Testis (tissue), 5 donors: ENCODE measurements at regions of chr9 and their contacts with region 1.

Region 1: GRCh38 chr9:129783516-129784361 is 19.2 kb upstream of the TOR1B start:
- DNase-seq: peak; percentile 83
- H3K4me3 ChIP-seq: no peak overlapping the region
- H3K27ac ChIP-seq: no peak overlapping the region
- H3K4me1 ChIP-seq: no peaks in the 10 kb centered on the region
- H3K27me3 ChIP-seq: no peaks in the 10 kb centered on the region
- CTCF ChIP-seq: peak; percentile 83 to 93 (median 92)
- POLR2A ChIP-seq: no peak

Region 2: DNA sequence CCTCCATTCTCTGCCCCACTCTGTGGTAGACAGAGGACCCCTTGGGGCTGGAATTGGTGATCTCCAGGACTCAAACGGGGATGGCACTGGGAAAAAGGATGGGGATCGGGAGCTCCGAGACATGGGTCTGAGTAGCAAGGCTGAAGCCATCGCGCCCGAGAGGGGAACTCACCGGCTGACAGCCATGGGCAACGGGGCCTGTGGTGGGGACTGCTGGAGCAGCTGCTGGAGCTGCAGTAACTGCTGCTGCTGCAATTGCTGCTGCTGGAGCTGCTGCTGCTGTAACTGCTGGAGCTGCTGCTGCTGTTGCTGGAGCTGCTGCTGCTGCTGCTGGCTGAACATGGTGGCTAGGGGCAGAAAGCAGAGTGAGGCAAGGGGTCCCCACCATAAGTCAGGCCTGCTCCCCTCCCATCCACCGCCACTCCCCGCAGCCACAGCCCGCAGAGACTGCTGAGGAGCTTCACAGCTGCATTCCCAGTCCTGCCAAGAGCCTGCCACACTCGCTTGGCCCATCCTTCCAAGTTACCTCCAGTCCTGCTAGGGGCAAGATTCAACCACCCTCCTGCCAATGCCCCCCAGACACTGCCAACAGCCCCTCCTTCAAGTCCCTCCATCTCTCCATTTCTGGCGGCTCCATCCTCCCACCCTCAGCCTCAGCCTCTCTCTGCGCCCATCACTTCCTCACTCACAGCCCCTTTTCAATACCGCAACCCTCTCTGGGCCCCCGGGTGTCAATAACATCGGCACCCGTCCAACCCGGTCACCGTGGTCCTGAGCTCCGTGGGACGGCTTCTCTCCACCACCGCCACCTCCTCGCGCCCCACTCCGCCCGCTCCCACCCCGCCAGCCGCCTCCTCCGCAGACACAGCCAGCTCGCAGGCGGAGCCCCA is 1593.0 kb before region 1 on chr9:
- intact Hi-C with region 1: no loop called
- DNase-seq: peak; percentile 32
- H3K4me3 ChIP-seq: peak overlapping the region; percentile 83 to 90
- H3K27ac ChIP-seq: peak overlapping the region; percentile 84 to 86
- H3K4me1 ChIP-seq: peaks cover 15% of the 10 kb centered on the region
- H3K27me3 ChIP-seq: no peaks in the 10 kb centered on the region
- CTCF ChIP-seq: no peak
- POLR2A ChIP-seq: no peak

Region 3: GRCh38 chr9:129139993-129140396 is 643.7 kb before region 1 on chr9:
- intact Hi-C with region 1: loop called (anchors 10 kb)
- DNase-seq: peak; percentile 94
- H3K4me3 ChIP-seq: peak overlapping the region in 1 of 2 donors; percentile 9
- H3K27ac ChIP-seq: peak overlapping the region; percentile 96 to 98
- H3K4me1 ChIP-seq: peaks cover 71% of the 10 kb centered on the region
- H3K27me3 ChIP-seq: no peaks in the 10 kb centered on the region
- CTCF ChIP-seq: no peak
- POLR2A ChIP-seq: no peak

Region 4: GRCh38 chr9:129648092-129648763 is 135.5 kb before region 1 on chr9:
- intact Hi-C with region 1: loop called (anchors 5 kb)
- DNase-seq: no peak
- H3K4me3 ChIP-seq: no peak overlapping the region
- H3K27ac ChIP-seq: no peak overlapping the region
- H3K4me1 ChIP-seq: no peaks in the 10 kb centered on the region
- H3K27me3 ChIP-seq: no peaks in the 10 kb centered on the region
- CTCF ChIP-seq: no peak
- POLR2A ChIP-seq: no peak

Region 5: DNA sequence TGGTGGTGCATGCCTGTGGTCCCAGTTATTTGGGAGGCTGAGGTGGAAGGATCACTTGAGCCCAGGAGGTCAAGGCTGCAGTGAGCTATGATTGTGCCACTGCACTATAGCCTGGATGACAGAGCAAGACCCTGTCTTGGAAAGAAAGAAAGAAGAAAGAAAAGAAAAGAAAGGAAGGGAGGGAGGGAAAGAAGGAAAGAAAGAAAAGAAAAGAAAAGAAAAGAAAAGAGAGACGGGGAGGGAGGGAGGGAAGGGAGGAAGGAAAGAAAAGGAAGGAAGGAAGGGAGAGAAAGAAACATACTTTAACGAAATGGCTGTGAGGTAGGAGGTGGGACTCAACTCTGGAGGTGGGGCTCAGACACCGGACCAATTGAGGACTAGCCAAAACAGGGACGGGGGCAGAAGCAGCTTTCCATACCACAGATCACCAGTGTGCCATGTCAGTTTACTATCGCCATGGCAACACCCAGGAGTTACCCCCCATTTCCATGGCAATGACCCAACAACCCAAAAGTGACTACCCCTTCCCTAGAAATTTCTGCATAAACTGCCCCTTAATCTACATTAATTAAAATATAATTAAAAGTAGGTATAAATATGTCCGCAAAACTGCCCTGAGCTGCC is 52.1 kb before region 1 on chr9:
- intact Hi-C with region 1: loop called (anchors 5 kb)
- DNase-seq: no peak
- H3K4me3 ChIP-seq: no peak overlapping the region
- H3K27ac ChIP-seq: no peak overlapping the region
- H3K4me1 ChIP-seq: no peaks in the 10 kb centered on the region
- H3K27me3 ChIP-seq: no peaks in the 10 kb centered on the region
- CTCF ChIP-seq: no peak
- POLR2A ChIP-seq: no peak